Dorsolateral prefrontal cortex (tissue), 120 donors: ENCODE measurements at regions of chr2 and their contacts with region 1.

Region 1: DNA sequence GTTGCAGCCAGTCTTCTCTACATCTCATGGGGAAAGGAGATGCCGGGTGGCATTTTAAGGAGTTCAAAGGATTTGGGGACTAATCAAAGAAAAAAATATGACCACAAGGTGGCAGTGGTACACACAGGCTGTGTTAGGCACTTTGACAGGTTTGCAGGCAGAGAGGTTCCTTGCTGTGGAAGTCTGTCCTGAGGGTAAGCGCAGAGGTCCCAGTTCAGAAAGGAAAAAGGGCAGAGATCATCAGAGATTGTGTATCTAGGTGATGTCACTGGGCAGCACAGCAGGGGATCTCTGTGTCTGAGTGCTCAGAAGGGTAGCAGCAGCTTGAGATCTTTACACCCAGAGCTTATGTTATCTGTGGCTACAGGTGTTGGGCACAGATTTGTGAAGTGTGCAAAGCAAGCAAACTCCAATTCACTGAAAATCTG is 231.4 kb downstream of the LRRTM1 start:
- DNase-seq: peak in 3 of 10 donors; percentile 30 to 44 (median 42)
- H3K4me3 ChIP-seq: no peak overlapping the region
- H3K27ac ChIP-seq: peak overlapping the region in 1 of 59 donors; percentile 13
- H3K27me3 ChIP-seq: no peaks in the 10 kb centered on the region
- CTCF ChIP-seq: peak; percentile 52 to 87 (median 78)

Region 2: DNA sequence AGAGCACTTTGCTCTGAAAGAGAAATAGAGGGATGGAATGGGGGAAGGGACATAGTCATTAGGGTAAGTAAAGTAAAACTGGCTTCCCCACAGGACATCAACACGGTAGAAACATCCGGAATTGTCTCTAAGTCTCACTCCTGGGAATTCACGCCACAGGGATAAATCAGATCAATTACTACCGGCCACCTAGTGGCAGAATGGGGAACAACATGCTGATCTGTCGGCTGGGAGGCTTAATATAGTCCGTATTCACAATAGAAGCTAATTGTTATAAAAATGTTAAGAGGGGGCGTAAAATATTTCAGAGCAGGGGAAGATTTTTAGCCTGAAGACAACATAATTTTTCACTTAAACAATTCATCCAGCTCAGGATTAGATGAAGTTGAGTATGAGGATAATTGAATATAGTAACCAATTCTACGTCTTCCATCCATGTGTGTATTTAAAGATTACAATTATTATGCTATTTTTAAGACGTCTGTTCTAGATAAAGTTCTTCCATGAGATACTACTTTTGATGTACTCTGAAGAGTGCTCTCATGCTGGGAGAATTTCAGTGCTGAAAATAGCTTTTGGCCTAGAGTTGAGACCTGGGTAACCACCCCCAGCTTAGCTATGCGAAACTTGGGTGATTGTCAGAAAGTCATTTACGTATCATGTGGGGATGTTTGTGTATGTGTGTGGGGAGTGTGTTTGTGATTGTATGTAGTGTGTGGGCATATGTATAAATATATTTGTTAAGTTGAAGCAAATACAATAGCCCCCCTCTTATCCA is 165.7 kb after region 1 on chr2:
- intact Hi-C with region 1: loop called in 1 of 2 experiments (anchors 10 kb)
- DNase-seq: peak in 4 of 10 donors; percentile 36 to 58 (median 46)
- H3K4me3 ChIP-seq: no peak overlapping the region
- H3K27ac ChIP-seq: no peak overlapping the region
- H3K27me3 ChIP-seq: no peaks in the 10 kb centered on the region
- CTCF ChIP-seq: peak; percentile 49 to 83 (median 72)

Region 3: DNA sequence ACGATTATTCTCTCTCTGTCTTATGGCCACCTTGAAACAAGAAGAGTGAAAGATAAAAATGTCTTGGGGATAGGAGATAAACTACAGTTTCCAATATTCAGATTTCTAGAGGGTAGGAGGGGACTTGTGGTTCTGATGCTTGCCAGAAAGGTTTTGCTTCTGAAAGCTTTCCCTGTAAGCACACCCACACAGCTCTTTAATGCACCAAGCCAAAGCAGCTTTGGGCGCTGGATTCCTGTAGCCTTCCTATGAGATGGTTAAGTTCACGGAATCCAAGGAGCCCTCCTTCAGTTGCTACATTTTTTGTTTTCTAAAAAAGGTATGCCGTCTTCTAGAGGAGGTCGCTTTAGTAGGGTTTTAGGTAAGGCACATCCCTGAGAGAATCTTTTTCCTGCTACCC is 226.5 kb after region 1 on chr2:
- intact Hi-C with region 1: loop called in 1 of 2 experiments (anchors 5 kb)
- DNase-seq: peak in 3 of 10 donors; percentile 31 to 49 (median 41)
- H3K4me3 ChIP-seq: peak overlapping the region in 51 of 59 donors; percentile 8 to 76 (median 35)
- H3K27ac ChIP-seq: peak overlapping the region in 50 of 59 donors; percentile 3 to 86 (median 62)
- H3K27me3 ChIP-seq: peaks cover 0 to 37% (median 10%) of the 10 kb centered on the region in 45 donors
- CTCF ChIP-seq: no peak